A549 (cell line): ENCODE measurements at regions of chr11 and their contacts with region 1.

Region 1: DNA sequence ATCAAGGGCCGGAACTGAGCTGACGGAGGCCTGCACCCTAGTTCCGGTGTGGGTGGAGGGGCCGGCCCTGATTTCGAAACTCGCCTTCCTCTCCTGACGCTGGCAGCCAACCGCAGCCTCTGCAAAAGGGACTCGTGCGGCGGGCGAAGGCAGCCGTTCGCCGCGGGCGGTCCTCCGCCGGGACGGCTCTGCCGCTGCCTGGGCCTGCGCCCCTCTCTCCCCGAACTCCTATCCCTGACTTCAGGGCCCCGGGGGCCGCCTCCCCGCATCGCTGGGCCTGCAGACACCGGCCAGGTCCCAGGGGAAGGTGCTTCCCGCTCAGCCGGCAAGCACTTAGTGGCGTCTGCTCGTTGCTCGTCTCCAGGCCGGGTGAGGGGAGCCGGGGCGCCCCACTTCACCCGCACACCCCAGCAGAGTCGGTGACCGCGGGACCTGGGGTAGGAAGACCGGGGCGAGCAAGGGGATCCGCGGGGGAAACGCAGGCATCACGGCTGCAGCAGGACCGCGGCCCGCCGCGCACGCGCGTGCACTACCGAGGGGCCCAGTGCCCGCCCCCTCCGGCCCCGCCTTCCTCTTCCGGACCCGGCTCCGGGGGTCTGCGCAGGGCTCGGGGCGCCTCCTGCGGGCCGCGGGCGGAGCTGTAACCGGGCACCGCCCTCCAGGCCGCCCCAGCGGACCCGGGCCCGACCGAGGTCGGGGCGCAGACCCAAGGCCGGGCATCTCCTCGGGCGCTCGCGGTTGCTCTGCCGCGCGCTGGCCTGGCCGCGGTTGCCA is 464 bp upstream of the ANKRD13D start:
- DNase-seq: peak; percentile 83 to 89
- ATAC-seq: peak; percentile 72 to 82
- H3K4me3 ChIP-seq: peak overlapping the region; percentile 65
- H3K27ac ChIP-seq: peak overlapping the region; percentile 95 to 98
- H3K4me1 ChIP-seq: peaks cover 19% of the 10 kb centered on the region
- CTCF ChIP-seq: peak; percentile 43
- EP300 ChIP-seq: no peak
- POLR2A ChIP-seq: peak; percentile 80
- RAD21 ChIP-seq: peak; percentile 14 to 30; a peak in 3 of 5 replicates

Region 2: DNA sequence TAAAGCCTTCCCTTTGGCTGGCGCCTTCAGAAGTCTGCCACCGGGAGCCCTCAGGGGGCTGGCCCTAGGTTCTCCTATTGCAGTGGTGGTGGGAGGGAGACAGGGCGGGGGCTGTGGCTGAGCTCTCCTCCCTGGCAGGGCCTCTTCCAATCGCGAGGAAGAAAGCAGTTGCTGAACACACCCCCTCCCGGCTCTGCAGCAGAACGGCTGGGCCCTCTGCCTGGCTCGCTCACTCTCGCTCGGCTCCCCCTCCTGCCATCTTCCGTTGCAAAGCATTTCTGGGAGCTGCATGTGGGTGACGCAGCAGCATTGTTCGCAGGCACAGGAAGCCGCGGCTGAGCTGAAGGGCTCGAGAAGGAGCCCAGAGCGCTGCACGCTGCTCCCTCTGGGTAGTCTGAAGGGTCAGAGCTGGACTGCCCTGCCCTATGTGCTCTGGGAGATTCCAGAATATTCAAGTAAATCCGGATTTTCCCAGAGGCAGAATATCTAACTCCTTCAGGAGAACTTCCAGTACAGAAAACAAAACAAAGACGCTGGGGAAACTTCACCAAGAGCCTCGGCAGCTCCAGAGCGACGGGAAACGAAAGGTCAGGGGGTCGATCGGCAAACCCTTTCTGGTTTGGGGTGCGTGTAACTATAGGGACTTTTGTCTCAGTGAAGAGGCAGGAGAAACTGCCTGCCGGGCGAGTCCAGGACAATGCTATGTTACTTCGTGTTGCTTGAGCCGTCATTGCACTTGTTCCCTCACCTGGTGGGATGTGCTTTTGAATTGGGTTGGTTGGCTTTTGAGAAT is 48.7 kb before region 1 on chr11:
- CTCF ChIA-PET with region 1: interaction called, 3 read pairs
- POLR2A ChIA-PET with region 1: interaction called, 10 read pairs
- DNase-seq: peak; percentile 93 to 97
- ATAC-seq: peak; percentile 96 to 98
- H3K4me3 ChIP-seq: peak overlapping the region; percentile 69
- H3K27ac ChIP-seq: peak overlapping the region; percentile 80 to 89
- H3K4me1 ChIP-seq: peaks cover 28% of the 10 kb centered on the region
- CTCF ChIP-seq: no peak
- EP300 ChIP-seq: no peak
- POLR2A ChIP-seq: peak; percentile 98
- RAD21 ChIP-seq: no peak

Region 3: GRCh38 chr11:67303132-67303834 is 14.6 kb after region 1 on chr11 and contains the start of gene SSH3:
- CTCF ChIA-PET with region 1: interaction called, 14 read pairs
- POLR2A ChIA-PET with region 1: interaction called, 13 read pairs
- DNase-seq: peak; percentile 71 to 74
- ATAC-seq: peak; percentile 85 to 91
- H3K4me3 ChIP-seq: peak within 1 kb of the TSS; percentile 93
- H3K27ac ChIP-seq: peak within 1 kb of the TSS; percentile 93 to 94
- H3K4me1 ChIP-seq: peaks cover 22% of the 10 kb centered on the region; the same call in 2 of the 3 replicates
- CTCF ChIP-seq: no peak
- EP300 ChIP-seq: no peak
- POLR2A ChIP-seq: peak; percentile 65
- RAD21 ChIP-seq: no peak
- polyA plus RNA-seq, gene SSH3: 13.7 and 13.9 TPM in 2 replicates